Activated naive CD4-positive, alpha-beta T cell treated with anti-CD3 and anti-CD28 coated beads for 36 hours (primary cell): ENCODE measurements at regions of chr7 and their contacts with region 1.

Region 1: GRCh38 chr7:8176370-8177081 is 85.4 kb downstream of the ICA1 start:
- DNase-seq: peak; percentile 78
- H3K4me3 Mint-ChIP-seq: peak overlapping the region; percentile 47
- H3K27ac Mint-ChIP-seq: peak overlapping the region; percentile 83
- H3K4me1 Mint-ChIP-seq: peaks cover 43% of the 10 kb centered on the region
- H3K27me3 Mint-ChIP-seq: no peaks in the 10 kb centered on the region

Region 2: DNA sequence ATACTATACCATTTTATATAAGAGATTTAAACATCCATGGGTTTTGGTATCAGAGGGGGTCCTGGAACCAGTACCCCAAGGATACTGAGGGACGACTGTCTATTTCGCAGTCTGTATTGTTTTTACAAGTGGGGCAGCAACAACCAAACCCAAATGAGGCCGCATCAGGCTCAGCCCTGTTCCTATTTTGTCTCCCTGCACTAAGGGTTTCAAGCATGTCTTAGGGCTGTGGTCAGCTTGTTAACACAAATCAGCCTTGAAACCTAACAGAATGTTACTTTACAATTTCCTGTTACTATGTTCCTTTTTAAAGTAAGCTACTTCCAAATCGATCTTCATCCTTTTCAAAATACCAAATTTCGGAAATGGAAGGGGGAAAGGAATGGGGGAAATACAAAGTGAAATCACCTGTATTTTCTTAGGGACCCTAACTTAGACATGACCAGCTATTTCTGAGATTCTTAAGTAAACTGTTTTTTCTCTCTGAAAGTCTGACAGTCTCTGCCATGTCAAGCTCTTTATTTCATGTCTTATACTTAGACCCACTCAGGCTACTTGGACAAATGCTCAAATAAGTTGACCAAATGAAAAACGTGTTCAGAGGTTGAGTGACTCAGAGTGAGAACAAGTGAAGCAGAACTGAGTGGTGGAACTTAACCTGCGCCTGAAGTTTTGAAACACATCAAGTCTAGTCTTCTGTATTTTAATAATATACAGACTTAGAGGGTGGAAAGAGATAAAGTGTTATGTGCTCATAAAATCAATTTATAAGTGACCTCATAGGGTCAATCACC is 918.4 kb before region 1 on chr7:
- CTCF ChIA-PET with region 1: no interaction called
- intact Hi-C with region 1: loop called (anchors 2 kb)
- DNase-seq: no peak
- H3K4me3 Mint-ChIP-seq: no peak overlapping the region
- H3K27ac Mint-ChIP-seq: peak overlapping the region; percentile 64
- H3K4me1 Mint-ChIP-seq: peaks cover 24% of the 10 kb centered on the region
- H3K27me3 Mint-ChIP-seq: no peaks in the 10 kb centered on the region

Region 3: DNA sequence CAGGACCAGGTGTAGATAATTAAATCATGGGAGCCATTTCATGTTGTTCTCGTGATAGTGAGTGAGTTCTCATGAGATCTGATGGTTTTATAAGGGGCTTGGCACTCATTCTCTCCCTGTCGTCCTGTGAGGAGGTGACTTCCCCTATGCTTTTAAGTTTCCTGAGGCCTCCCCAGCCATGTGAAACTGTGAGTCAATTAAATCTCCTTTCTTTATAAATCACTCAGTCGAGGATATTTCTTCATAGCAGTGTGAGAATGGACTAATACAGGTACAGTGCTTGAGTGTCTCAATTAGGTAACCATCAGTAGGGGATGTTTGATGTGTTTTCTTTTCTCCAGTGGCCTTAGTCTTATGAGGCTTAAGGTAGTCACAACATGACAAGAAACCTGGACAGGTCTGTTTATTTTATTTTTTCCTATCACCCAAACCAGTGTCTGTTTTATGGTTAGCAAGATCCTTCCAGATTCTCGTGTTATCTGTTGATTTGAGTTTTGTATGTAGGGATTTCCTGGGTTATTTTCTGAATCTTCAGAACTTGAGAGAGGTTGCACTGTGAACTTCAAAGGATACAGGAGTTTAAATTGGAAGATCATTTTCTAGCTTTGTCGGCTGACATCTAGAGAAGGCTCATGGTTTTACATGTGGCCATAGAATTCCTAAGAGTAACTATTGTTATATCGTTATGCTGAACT is 503.8 kb before region 1 on chr7:
- CTCF ChIA-PET with region 1: no interaction called
- intact Hi-C with region 1: loop called (anchors 2 kb)
- DNase-seq: peak; percentile 64
- H3K4me3 Mint-ChIP-seq: peak overlapping the region; percentile 31
- H3K27ac Mint-ChIP-seq: peak overlapping the region; percentile 79
- H3K4me1 Mint-ChIP-seq: peaks cover 45% of the 10 kb centered on the region
- H3K27me3 Mint-ChIP-seq: no peaks in the 10 kb centered on the region

Region 4: GRCh38 chr7:8015100-8015748 is 161.3 kb before region 1 on chr7:
- CTCF ChIA-PET with region 1: interaction called, 4 read pairs
- intact Hi-C with region 1: loop called (anchors 1 kb)
- DNase-seq: no peak
- H3K4me3 Mint-ChIP-seq: peak overlapping the region; percentile 4
- H3K27ac Mint-ChIP-seq: peak overlapping the region; percentile 68
- H3K4me1 Mint-ChIP-seq: peaks cover 47% of the 10 kb centered on the region
- H3K27me3 Mint-ChIP-seq: no peaks in the 10 kb centered on the region

Region 5: GRCh38 chr7:8125680-8126444 is 50.7 kb before region 1 on chr7:
- CTCF ChIA-PET with region 1: no interaction called
- intact Hi-C with region 1: loop called (anchors 1 kb)
- DNase-seq: peak; percentile 86
- H3K4me3 Mint-ChIP-seq: peak overlapping the region; percentile 71
- H3K27ac Mint-ChIP-seq: peak overlapping the region; percentile 96
- H3K4me1 Mint-ChIP-seq: peaks cover 57% of the 10 kb centered on the region
- H3K27me3 Mint-ChIP-seq: no peaks in the 10 kb centered on the region

Region 6: GRCh38 chr7:8143151-8143874 is 33.2 kb before region 1 on chr7:
- CTCF ChIA-PET with region 1: no interaction called
- intact Hi-C with region 1: loop called (anchors 2 kb)
- DNase-seq: peak; percentile 51
- H3K4me3 Mint-ChIP-seq: no peak overlapping the region
- H3K27ac Mint-ChIP-seq: peak overlapping the region; percentile 28
- H3K4me1 Mint-ChIP-seq: peaks cover 21% of the 10 kb centered on the region
- H3K27me3 Mint-ChIP-seq: no peaks in the 10 kb centered on the region